Activated T-helper 1 cell treated with anti-CD3 and anti-CD28 coated beads, Interleukin-12 subunit alpha, Interleukin-12 subunit beta, Interleukin-2, Interleukin-4 antibody, amounts not matched to agents 30 ng/mL and 10 ng/mL and 1 ng/mL, durations not matched to agents 14 hours and 24 hours and 36 hours (primary cell): ENCODE measurements at regions of chr3 and their contacts with region 1.

Region 1: DNA sequence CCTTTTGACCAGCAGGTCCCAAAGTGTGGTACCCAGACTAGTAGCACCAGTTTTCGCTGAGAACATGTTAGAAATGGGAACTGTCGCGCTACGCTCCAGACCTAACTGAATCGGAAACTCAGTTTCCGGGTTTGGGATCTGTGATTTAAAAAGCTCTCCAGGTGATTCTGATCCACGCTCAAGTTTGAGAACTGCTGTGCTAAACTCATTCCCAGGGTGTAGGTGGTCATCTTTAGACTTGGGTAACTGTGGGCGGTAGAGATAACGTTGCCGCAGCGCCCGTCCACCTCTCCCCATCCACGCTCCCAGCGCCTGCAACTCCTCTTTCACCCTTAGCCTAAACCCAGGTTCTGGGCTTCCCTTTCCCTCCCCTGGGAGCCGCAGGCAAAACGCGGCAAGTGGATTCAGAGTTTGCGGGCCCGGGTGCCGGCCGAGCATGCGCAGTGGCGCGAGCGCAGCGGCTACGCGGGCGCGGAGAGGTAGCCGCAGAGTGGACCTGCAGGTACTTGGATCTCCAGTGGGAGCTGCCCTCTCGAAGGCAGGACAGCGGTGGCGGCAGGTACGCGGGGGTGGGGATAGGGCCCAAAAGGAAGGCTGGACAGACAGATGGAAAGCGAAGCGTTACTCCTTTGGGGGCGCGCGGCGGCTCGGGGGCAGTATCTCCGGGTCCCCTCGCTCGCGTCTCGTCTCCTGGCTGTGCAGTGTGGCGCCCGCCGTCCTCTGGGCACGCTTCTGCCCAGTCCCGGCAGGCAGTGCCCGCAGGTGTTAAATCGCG is at the start of gene PLS1:
- DNase-seq: peak; percentile 89
- H3K4me3 Mint-ChIP-seq: peak within 1 kb of the TSS; percentile 95
- H3K27ac Mint-ChIP-seq: peak within 1 kb of the TSS; percentile 69
- H3K4me1 Mint-ChIP-seq: peaks cover 25% of the 10 kb centered on the region
- H3K27me3 Mint-ChIP-seq: peaks cover 4% of the 10 kb centered on the region
- total RNA-seq, gene PLS1: 4.4 and 4.8 TPM in 2 replicates

Region 2: DNA sequence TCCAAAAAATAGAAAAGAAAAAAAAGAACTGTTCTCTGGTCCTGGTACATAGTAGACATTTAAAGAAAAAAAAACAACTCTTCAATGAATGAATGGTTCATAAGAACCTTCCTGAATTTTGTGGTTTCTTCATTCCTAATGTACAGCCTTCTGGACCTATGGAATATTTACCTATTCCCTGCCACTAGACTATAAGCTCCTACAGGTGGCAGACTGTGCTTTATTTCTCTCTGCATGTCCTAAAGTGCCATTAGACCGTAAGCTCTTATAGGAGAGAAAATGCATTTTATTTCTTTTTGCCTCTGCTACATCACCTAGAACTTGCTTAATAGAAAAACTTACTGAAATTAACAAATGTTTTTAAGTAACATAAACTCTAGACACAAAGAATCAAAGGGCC is 23.4 kb before region 1 on chr3:
- intact Hi-C with region 1: no loop called
- DNase-seq: no peak
- H3K4me3 Mint-ChIP-seq: no peak overlapping the region
- H3K27ac Mint-ChIP-seq: no peak overlapping the region
- H3K4me1 Mint-ChIP-seq: peaks cover 34% of the 10 kb centered on the region
- H3K27me3 Mint-ChIP-seq: no peaks in the 10 kb centered on the region

Region 3: GRCh38 chr3:142723968-142724681 is 128.0 kb after region 1 on chr3 and contains the start of gene TRPC1:
- intact Hi-C with region 1: loop called (anchors 1 kb)
- DNase-seq: peak; percentile 73
- H3K4me3 Mint-ChIP-seq: peak within 1 kb of the TSS; percentile 86
- H3K27ac Mint-ChIP-seq: peak within 1 kb of the TSS; percentile 83
- H3K4me1 Mint-ChIP-seq: peaks cover 4% of the 10 kb centered on the region
- H3K27me3 Mint-ChIP-seq: peaks cover 50% of the 10 kb centered on the region
- total RNA-seq, gene TRPC1: 0.66 and 1.1 TPM in 2 replicates